Activated T-helper 1 cell treated with anti-CD3 and anti-CD28 coated beads, Interleukin-12 subunit alpha, Interleukin-12 subunit beta, Interleukin-2, Interleukin-4 antibody, amounts not matched to agents 30 ng/mL and 10 ng/mL and 1 ng/mL, durations not matched to agents 14 hours and 24 hours and 36 hours (primary cell): ENCODE measurements at regions of chr3 and their contacts with region 1.

Region 1: DNA sequence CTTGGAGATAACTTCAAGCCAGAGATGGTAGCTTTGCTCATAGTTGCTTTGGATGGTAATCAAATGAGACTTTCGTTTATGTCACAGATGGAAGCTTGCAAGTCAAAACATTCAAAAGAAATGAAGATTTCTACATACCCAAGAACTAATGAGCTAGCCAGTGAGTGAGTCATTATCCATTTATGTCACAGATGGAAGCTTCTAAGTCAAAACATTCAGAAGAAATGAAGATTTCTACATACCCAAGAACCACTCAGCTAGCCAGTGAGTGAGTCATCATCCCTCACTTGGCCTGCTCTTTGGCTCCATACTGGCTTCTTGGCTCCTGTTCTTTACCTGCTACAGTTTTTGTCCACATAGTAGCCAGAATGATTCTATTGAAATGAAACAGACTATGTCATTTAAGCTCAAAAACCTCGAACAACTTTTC is 559.8 kb upstream of the CBLB start:
- DNase-seq: no peak
- H3K4me3 Mint-ChIP-seq: no peak overlapping the region
- H3K27ac Mint-ChIP-seq: peak overlapping the region; percentile 93
- H3K4me1 Mint-ChIP-seq: peaks cover 57% of the 10 kb centered on the region
- H3K27me3 Mint-ChIP-seq: no peaks in the 10 kb centered on the region

Region 2: GRCh38 chr3:105752744-105753415 is 675.7 kb before region 1 on chr3:
- intact Hi-C with region 1: loop called (anchors 5 kb)
- DNase-seq: peak; percentile 24
- H3K4me3 Mint-ChIP-seq: peak overlapping the region; percentile 57
- H3K27ac Mint-ChIP-seq: peak overlapping the region; percentile 98
- H3K4me1 Mint-ChIP-seq: peaks cover 88% of the 10 kb centered on the region
- H3K27me3 Mint-ChIP-seq: no peaks in the 10 kb centered on the region

Region 3: GRCh38 chr3:105827959-105828358 is 600.6 kb before region 1 on chr3:
- intact Hi-C with region 1: loop called (anchors 1 kb)
- DNase-seq: no peak
- H3K4me3 Mint-ChIP-seq: peak overlapping the region; percentile 57
- H3K27ac Mint-ChIP-seq: peak overlapping the region; percentile 96
- H3K4me1 Mint-ChIP-seq: peaks cover 88% of the 10 kb centered on the region
- H3K27me3 Mint-ChIP-seq: no peaks in the 10 kb centered on the region

Region 4: GRCh38 chr3:106068795-106069194 is 359.8 kb before region 1 on chr3:
- intact Hi-C with region 1: loop called (anchors 5 kb)
- DNase-seq: peak; percentile 3
- H3K4me3 Mint-ChIP-seq: no peak overlapping the region
- H3K27ac Mint-ChIP-seq: peak overlapping the region; percentile 87
- H3K4me1 Mint-ChIP-seq: peaks cover 15% of the 10 kb centered on the region
- H3K27me3 Mint-ChIP-seq: no peaks in the 10 kb centered on the region

Region 5: DNA sequence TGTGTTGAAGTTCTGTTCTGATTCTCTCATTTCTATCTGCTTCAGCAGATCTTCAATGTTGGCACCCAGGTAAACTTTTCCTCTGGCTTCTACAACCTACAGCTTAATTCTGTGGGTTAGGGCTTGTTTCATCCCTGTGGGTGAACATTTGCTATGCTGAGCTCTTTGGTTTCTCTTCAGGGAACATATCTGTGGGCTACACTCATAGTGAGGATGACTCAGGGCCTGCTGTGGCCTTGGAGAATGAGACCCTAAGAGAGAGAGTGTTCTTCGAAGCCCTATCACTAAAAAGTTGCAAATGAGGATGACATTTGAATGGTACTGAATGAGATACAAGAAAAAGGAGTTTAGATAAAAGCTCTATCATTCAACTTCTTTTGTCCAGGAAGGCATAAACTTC is 213.5 kb before region 1 on chr3:
- intact Hi-C with region 1: loop called (anchors 10 kb)
- DNase-seq: peak; percentile 5
- H3K4me3 Mint-ChIP-seq: peak overlapping the region; percentile 43
- H3K27ac Mint-ChIP-seq: peak overlapping the region; percentile 82
- H3K4me1 Mint-ChIP-seq: peaks cover 56% of the 10 kb centered on the region
- H3K27me3 Mint-ChIP-seq: no peaks in the 10 kb centered on the region

Region 6: GRCh38 chr3:106534206-106534605 is 105.6 kb after region 1 on chr3:
- intact Hi-C with region 1: loop called (anchors 1 kb)
- DNase-seq: peak; percentile 40
- H3K4me3 Mint-ChIP-seq: no peak overlapping the region
- H3K27ac Mint-ChIP-seq: peak overlapping the region; percentile 72
- H3K4me1 Mint-ChIP-seq: peaks cover 28% of the 10 kb centered on the region
- H3K27me3 Mint-ChIP-seq: no peaks in the 10 kb centered on the region

Region 7: DNA sequence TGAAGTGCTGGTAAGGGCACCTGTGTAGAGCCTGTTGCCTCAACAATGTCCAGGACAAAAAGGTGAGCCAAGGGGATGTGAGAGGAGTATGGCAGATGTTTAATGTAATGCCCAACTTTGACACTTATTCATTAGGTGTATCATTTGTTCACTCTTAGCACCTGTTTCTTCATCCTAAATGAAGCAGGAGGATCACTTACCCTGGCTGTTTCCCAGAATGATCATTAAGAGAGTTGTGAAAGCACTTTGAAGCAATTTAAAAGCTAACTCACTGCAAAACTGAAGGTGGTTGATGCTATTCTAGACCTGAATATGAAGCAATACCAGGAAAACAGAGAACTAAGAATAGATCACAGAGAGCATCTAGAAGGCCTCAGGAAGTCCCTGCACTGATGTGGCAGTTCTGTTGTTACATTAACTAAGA is 1864.3 kb after region 1 on chr3:
- intact Hi-C with region 1: loop called (anchors 10 kb)
- DNase-seq: no peak
- H3K4me3 Mint-ChIP-seq: peak overlapping the region; percentile 53
- H3K27ac Mint-ChIP-seq: peak overlapping the region; percentile 83
- H3K4me1 Mint-ChIP-seq: peaks cover 64% of the 10 kb centered on the region
- H3K27me3 Mint-ChIP-seq: peaks cover 2% of the 10 kb centered on the region